GM10248 (cell line): ENCODE measurements at regions of chr9 and their contacts with region 1.

Region 1: GRCh38 chr9:5593904-5594303 is 35.0 kb upstream of the RIC1 start:
- DNase-seq: peak; percentile 58
- CTCF ChIP-seq: no peak

Region 2: DNA sequence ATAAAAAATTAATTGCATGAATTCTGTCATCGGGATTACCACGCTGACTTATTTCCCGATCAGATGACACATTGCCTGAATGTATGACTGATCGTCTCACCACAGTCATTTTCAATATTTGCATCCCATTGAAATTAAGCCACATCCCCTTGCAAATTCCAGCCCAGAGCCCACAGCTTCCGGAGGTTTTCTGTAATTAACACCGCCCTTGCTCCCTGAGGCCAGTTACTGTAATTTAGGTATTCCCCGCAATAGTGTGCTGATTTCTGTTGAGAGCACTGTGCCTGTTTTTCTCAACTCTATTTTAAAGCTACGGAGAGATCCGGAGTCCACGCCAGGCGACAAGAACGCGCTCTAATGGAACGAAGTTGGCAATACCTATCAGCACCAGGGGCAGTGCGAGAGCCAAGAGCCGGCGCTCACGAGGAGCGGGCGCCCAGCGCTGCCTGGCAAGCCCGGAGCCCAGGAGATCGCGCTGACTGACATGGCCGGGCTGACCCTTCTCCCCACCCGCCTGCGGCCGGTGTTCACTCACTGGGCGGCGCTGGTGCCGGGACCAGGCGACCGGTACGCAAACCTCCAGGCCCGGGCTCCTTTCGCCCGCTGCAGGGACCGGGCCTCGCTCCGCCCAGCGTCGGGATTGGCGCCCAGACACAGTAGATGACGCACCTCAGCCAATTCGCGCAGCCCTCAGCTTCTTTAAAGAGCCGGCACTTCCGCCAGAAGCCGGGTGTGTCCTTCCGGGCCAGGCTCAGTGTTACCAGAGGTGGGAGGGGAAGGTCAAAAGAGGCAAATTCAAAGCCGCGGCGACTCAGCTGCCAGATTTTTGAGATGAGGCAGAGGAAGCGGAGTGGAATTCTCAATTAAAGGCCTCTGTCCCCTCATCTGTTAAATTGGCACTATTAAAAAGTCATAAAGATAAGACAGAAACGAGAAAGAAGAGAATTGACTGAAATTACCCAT is 156.4 kb before region 1 on chr9 and contains the start of gene PLGRKT:
- CTCF ChIA-PET with region 1: interaction called, 13 read pairs
- POLR2A ChIA-PET with region 1: interaction called, 4 read pairs
- DNase-seq: peak; percentile 90
- CTCF ChIP-seq: peak; percentile 17

Region 3: GRCh38 chr9:5450359-5451091 is 143.4 kb before region 1 on chr9 and contains the start of gene CD274:
- CTCF ChIA-PET with region 1: interaction called, 53 read pairs
- POLR2A ChIA-PET with region 1: interaction called, 4 read pairs
- DNase-seq: peak; percentile 75
- CTCF ChIP-seq: peak; percentile 81

Region 4: GRCh38 chr9:5608298-5609225 is 14.7 kb after region 1 on chr9:
- CTCF ChIA-PET with region 1: interaction called, 39 read pairs
- POLR2A ChIA-PET with region 1: no interaction called
- DNase-seq: no peak
- CTCF ChIP-seq: peak; percentile 23

Region 5: DNA sequence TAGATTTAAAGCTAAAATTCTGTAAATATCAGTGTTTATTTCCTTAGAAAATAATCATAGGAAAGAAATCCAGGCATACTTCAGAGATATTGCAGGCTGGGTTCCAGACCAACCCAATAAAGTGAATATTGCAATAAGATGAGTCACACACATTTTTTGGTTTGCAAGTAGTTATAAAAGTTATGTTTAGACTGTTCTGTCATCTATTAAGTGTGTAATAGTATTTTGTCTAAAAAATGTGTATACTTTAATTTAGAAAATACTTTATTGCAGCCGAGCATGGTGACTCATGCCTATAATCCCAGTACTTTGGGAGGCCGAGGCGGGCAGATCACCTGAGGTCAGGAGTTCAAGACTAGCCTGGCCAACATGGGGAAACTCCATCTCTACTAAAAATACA is 28.1 kb after region 1 on chr9:
- CTCF ChIA-PET with region 1: interaction called, 11 read pairs
- POLR2A ChIA-PET with region 1: no interaction called
- DNase-seq: no peak
- CTCF ChIP-seq: no peak

Region 6: DNA sequence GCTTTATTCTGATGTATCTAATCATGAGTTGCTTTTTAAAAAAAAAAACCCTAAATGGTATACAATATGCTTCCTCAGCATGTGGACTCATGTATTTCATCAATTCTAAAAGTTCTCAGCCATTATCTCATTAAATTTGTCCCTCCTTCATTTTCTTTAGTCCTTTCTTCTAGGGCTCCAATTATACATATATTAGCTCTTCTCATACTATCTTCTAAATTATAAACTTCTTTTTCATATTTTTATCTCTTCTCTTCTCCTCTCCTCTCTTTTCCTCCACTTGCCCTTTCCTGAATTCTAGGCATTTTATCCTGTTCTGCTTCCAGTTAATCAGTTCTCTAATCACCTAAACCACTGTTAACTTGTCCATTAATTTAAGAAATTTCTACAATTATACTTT is 566.7 kb after region 1 on chr9:
- CTCF ChIA-PET with region 1: no interaction called
- POLR2A ChIA-PET with region 1: no interaction called
- DNase-seq: no peak
- CTCF ChIP-seq: no peak

Region 7: GRCh38 chr9:6512085-6512657 is 918.3 kb after region 1 on chr9:
- CTCF ChIA-PET with region 1: no interaction called
- POLR2A ChIA-PET with region 1: no interaction called
- DNase-seq: no peak
- CTCF ChIP-seq: no peak